ENCODE measurements at regions of chr5 and their contacts with region 1.

Region 1: DNA sequence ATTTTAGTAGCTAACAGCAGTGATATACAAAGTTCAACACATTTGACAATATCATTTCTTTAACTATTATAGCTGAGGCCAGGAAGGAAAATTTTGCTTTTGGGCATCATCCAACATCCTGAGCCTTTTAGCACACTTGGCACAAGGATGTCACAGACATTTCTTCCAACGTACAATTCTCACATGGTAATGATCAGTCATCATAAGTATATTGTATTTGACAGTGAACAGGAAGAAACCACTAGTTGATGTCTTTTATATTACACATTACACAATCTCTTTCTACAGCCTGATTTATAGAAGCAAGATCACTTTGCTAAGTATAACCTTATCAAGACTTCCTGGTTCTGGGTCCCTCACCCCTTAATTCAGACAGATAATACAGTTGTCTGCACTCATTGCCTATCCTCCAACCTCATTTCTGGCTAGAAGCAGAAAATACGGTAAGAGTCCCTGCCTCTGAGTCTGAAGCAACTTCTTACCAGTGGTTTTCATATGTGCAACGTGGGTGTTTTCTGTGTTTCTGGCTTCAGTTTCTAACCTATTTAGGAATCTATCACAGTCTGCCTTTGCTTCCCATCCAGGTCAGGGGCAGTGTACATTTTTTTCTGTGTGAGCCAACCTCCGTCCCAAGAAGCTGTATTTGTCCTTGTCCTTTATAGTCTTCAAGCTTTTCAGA is 167.8 kb downstream of the PAM start:
- DNase-seq: no peak
- H3K4me3 ChIP-seq: no peak overlapping the region
- H3K27ac ChIP-seq: no peak overlapping the region
- H3K4me1 ChIP-seq: no peaks in the 10 kb centered on the region
- H3K27me3 ChIP-seq: no peaks in the 10 kb centered on the region
- CTCF ChIP-seq: no peak
- POLR2A ChIP-seq: no peak

Region 2: GRCh38 chr5:102670224-102670836 is 252.6 kb before region 1 on chr5:
- intact Hi-C with region 1: no loop called
- DNase-seq: no peak
- H3K4me3 ChIP-seq: no peak overlapping the region
- H3K27ac ChIP-seq: no peak overlapping the region
- H3K4me1 ChIP-seq: no peaks in the 10 kb centered on the region
- H3K27me3 ChIP-seq: no peaks in the 10 kb centered on the region
- CTCF ChIP-seq: no peak
- POLR2A ChIP-seq: no peak

Region 3: DNA sequence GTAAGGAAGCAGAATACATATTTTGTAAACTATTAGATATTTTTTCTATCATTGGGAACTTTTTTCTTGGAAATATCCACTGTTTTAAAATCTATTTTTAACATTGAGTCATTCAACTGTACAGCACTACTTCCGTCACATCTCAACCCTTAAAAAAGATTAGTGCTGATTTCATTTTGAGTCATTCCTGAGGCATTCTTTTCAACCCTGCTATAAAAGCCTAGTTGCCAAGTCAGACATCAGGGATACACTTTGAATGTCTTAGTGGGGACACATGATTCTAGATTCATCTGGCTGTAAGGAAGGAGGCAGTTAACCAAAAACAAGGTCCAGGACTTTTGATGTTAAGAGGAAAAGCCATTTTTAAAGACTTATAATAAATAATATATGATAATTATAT is 36.1 kb after region 1 on chr5:
- intact Hi-C with region 1: loop called (anchors 2 kb)
- DNase-seq: no peak
- H3K4me3 ChIP-seq: no peak overlapping the region
- H3K27ac ChIP-seq: no peak overlapping the region
- H3K4me1 ChIP-seq: no peaks in the 10 kb centered on the region
- H3K27me3 ChIP-seq: no peaks in the 10 kb centered on the region
- CTCF ChIP-seq: no peak
- POLR2A ChIP-seq: no peak

Measured in breast epithelium (tissue), 4 donors.